Left lung (tissue), 14 donors: ENCODE measurements at regions of chr11 and their contacts with region 1.

Region 1: GRCh38 chr11:35822815-35823495 is 120.9 kb upstream of the LDLRAD3 start:
- DNase-seq: no peak
- ATAC-seq: peak; percentile 5
- H3K4me3 ChIP-seq: no peak overlapping the region
- H3K27ac ChIP-seq: no peak overlapping the region
- H3K4me1 ChIP-seq: peaks cover 0 to 13% of the 10 kb centered on the region in 2 donors
- H3K27me3 ChIP-seq: no peaks in the 10 kb centered on the region
- CTCF ChIP-seq: no peak

Region 2: DNA sequence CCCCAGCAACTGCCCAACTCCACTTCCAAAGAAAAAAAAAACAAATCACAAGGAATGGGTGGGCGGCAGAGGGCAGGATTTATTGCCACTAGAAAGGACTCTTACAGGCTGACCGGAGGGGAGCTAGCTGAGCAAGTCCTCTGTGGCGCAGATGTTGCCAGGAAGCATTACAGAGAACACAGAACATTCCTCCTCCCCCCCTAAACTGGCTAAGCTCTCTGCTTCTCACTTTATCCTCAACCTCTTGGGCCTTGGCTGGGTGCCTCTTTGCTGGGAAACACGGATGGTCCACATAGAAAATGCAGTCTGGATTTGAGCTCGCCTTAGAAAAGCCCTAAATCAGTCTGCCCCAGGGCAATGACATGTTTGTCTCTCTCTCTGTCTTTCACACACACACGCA is 217.2 kb before region 1 on chr11:
- intact Hi-C with region 1: loop called in 1 of 2 experiments (anchors 10 kb)
- DNase-seq: peak in 2 of 4 donors; percentile 63 to 85
- ATAC-seq: peak; percentile 47
- H3K4me3 ChIP-seq: no peak overlapping the region
- H3K27ac ChIP-seq: no peak overlapping the region
- H3K4me1 ChIP-seq: no peaks in the 10 kb centered on the region
- H3K27me3 ChIP-seq: peaks cover 0 to 22% of the 10 kb centered on the region in 2 donors
- CTCF ChIP-seq: no peak